Activated CD4-positive, alpha-beta memory T cell treated with anti-CD3 and anti-CD28 coated beads for 36 hours (primary cell): ENCODE measurements at regions of chr7 and their contacts with region 1.

Region 1: DNA sequence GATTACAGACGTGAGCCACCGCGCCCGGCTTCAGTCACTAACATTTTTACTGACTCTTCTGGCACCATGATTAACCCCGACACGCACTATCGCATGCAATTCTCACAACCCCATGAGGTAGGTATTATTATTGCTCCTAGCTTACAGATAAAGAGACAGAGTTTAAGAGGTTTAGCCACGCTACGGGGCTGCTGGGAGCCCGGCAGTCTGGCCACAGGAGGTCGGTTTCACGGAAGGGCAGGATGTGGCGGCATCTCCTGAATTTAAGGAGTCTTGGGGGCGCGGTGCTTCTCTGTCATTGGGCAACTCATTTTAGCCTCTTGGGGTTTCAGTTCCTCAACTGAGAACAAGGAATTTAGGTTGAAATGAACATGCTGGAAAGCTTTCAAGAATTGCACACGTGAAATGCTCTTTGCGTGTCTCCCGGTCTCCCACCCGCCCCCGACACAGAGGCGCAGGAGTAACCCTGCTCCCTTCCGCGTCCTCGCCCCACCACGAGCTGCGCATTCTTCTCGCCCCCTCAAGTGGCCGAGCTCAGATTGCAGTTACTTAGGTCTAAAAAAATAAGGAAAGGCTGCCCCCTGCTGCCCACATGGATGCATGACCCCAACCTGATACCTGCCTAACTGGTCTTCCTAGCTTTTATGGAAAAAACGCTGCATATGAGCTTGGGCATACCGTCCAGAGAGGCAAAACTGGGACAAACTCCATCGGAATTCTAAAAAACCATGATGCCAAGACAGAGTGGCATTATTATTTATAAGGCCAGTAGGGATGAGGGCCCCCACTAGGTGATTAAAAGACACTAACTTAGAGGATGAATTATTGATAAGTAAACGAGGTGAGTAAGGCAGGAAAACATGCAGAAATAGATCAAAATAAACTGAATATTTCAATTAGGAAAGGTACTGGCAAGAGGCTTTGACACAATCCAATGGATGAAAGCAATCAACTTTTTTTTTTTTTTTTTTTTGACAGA is 12.4 kb downstream of the PRSS2 start:
- DNase-seq: peak; percentile 85
- H3K4me3 Mint-ChIP-seq: peak overlapping the region; percentile 70
- H3K27ac Mint-ChIP-seq: peak overlapping the region; percentile 90
- H3K4me1 Mint-ChIP-seq: peaks cover 3% of the 10 kb centered on the region
- H3K27me3 Mint-ChIP-seq: no peaks in the 10 kb centered on the region

Region 2: DNA sequence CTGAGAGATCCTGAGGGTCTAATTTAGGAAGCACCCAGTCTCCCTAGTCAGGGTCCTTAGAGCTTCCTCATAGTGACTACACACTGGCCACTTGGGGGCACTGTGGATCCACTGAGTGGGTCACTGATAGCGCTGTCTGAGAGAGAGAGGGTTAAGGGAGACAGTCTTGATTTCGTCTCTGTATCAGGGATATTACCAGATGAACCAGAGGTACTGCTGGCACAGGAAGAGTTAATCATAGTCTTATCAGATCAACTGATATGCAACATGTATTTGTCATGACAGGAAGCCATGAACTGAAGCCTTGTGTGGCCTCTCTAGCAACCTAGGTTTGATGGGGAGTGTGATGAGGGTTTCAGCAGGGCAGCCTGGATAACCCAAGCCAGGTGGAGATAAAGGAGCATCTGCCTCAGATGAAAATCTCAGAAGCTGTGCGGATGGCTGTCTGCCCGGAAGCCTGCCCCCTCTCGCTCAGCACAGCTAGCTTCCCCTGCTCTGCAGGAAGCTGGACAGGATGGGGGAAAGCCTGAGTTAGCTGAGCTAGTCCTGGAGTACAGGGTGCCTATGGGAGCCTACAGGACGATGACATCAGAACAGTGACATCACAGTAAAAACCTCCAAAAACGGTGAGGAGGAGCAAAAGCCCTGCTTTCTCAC is 248.0 kb before region 1 on chr7:
- CTCF ChIA-PET with region 1: interaction called, 7 read pairs
- POLR2A ChIA-PET with region 1: no interaction called
- intact Hi-C with region 1: loop called (anchors 1 kb)
- DNase-seq: peak; percentile 89
- H3K4me3 Mint-ChIP-seq: peak overlapping the region; percentile 67
- H3K27ac Mint-ChIP-seq: peak overlapping the region; percentile 86
- H3K4me1 Mint-ChIP-seq: peaks cover 32% of the 10 kb centered on the region
- H3K27me3 Mint-ChIP-seq: peaks cover 3% of the 10 kb centered on the region

Region 3: DNA sequence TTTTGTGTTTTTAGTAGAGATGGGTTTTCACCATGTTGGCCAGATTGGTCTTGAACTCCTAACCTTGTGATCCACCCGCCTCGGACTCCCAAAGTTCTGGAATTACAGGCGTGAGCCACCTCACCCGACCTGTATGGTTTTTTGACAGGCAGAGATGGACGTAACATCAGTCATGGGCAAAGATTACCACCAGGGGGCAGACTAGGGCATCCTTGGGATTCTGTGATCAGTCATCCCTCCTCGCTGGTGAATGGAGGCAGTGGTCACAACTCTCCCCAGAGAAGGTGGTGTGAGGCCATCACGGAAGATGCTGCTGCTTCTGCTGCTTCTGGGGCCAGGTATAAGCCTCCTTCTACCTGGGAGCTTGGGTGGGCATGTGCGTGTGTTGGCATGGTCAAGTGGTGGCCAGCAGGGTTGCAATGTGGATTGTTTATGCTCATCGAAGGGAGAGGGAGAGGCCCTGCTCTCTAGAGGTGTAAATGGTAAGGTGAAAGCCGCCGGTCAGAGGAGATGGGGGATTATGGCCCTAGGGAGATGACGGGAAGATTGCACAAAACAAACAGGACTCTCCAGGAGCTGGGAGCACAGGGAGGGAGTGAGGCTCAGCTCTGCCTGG is 156.7 kb before region 1 on chr7:
- CTCF ChIA-PET with region 1: interaction called, 54 read pairs
- POLR2A ChIA-PET with region 1: no interaction called
- intact Hi-C with region 1: no loop called
- DNase-seq: peak; percentile 79
- H3K4me3 Mint-ChIP-seq: peak overlapping the region; percentile 78
- H3K27ac Mint-ChIP-seq: peak overlapping the region; percentile 86
- H3K4me1 Mint-ChIP-seq: no peaks in the 10 kb centered on the region
- H3K27me3 Mint-ChIP-seq: no peaks in the 10 kb centered on the region

Region 4: DNA sequence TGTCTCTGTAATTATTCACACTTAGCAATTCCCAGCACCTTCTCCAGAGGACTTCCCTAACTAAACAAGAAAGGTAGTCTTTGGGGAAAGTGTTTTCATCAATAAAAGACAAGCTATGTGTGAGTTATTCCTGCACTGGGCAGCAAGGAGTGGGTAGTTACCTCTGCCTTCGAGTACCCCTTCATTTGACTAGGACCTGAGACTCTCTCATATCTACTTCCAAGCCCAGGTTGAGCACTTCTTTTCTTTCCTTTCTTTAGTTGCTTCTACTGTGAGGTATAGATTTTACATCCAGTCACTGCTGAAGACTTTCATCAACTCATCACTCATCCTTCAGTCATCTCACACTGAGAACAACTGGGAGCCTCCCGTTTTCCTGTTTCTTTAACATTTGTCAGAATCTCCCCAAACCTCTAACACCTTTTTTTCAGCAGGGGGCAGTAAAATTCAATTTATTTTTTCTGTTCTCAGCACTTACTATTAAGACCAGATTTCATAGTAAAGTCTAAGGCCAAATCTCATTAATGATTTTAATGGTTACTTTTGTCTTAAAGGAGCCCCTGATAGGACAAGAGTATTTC is 114.0 kb before region 1 on chr7:
- CTCF ChIA-PET with region 1: interaction called, 43 read pairs
- POLR2A ChIA-PET with region 1: no interaction called
- intact Hi-C with region 1: loop called (anchors 1 kb)
- DNase-seq: no peak
- H3K4me3 Mint-ChIP-seq: no peak overlapping the region
- H3K27ac Mint-ChIP-seq: peak overlapping the region; percentile 68
- H3K4me1 Mint-ChIP-seq: peaks cover 29% of the 10 kb centered on the region
- H3K27me3 Mint-ChIP-seq: no peaks in the 10 kb centered on the region

Region 5: DNA sequence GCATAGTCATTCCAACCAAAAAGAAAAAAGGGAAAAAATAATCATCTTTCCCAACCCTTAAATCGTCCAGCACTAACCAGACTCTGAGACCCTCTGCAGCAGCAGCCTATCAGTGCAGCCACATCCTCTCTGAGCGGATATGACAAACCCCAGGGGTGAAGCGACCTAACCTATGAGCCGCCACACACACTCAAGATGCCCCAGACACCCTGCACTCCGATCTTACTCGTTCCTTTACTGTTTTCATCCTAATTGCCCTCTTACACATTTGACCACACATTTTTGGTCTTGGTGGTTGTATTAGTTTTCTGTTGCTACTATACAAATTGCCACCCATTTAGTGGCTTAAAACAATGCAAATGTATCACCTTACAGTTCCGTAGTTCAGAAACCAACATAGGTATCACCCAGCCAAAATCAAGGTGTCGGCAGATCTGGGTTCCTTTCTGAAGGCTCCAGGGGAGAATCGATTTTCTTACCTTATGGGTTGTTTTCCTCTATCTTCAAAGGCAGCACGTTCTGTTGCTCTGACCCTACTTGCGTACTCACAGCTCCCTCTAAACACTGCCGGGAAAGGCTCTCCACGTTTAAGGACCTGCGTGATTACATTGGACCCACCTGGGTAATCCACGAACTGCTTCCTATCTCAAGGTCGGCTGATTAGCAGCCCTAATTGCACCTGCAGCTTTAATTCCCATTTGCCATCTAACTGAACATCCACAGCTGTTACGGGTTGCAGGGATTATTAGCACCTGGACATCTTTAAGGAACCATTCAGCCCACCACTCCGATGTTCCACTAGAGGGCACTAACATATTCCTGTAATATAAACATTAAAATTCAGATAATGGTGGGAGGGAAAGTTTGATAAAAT is 71.2 kb before region 1 on chr7:
- CTCF ChIA-PET with region 1: interaction called, 53 read pairs
- POLR2A ChIA-PET with region 1: interaction called, 4 read pairs
- intact Hi-C with region 1: loop called (anchors 1 kb)
- DNase-seq: peak; percentile 52
- H3K4me3 Mint-ChIP-seq: peak overlapping the region; percentile 79
- H3K27ac Mint-ChIP-seq: peak overlapping the region; percentile 89
- H3K4me1 Mint-ChIP-seq: peaks cover 50% of the 10 kb centered on the region
- H3K27me3 Mint-ChIP-seq: no peaks in the 10 kb centered on the region

Region 6: DNA sequence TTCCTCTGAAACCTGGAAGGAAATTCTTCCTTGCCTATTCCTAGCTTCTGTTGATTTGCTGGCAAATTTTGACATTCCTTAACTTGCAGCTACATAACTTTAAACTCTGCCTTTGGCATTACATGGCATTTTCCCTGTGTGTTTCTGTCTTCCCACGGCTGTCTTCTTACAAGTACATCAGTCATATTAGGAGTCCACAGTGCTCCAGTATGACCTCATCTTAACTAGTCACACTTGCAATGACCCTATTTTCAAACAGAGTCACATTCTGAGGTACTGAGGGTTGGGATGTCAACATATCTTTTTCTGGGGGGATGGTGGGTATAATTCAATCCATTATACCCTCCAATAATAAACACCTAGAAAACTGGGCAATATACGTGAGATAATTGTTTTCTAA is 34.3 kb after region 1 on chr7:
- CTCF ChIA-PET with region 1: interaction called, 390 read pairs
- POLR2A ChIA-PET with region 1: interaction called, 517 read pairs
- intact Hi-C with region 1: no loop called
- DNase-seq: no peak
- H3K4me3 Mint-ChIP-seq: no peak overlapping the region
- H3K27ac Mint-ChIP-seq: no peak overlapping the region
- H3K4me1 Mint-ChIP-seq: peaks cover 26% of the 10 kb centered on the region
- H3K27me3 Mint-ChIP-seq: no peaks in the 10 kb centered on the region